ENCODE measurements at regions of chr22 and their contacts with region 1.

Region 1: DNA sequence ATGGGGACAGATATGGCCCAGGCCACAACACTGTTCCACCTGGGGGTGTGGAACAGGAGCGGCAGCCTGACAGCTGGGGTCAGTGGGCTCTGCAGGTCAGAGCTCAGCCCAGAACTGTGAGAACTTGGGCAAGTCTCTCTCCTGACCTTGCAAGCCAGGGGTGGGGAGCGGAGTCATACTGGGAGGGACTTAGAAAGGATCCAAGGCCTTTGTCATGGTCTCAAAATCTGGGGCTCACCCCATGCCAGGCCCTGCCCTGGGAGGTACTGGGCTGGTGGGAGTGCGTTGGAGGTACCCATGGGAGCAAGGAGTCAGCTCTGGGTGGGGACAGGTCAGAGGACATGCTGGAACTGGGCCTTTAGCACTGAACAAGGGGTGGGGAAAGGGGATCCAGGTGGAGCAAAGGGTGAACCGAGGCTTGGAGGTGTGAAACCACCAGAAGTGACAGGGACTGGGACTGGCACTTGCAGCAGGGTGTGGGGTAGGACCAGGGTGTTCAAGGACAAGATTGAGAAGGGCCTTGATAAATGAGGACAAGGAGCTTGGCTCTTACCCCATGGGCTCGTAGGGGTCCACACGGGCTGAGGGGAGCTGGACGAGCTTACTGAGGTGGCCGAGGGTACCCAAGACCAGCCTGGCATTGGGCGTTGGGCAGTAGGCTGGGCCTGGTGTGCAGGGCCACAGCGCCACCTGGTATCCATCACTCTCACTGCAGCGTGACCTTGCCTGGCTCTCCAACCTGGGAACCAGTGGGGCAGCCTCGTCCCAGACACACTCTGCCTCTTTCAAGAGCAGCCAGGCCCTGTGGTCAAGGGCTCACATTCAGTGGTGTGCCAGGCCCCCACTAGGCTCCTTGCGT is 7.4 kb upstream of the PMM1 start:
- DNase-seq: no peak
- ATAC-seq: peak; percentile 67
- H3K4me3 Mint-ChIP-seq: no peak overlapping the region
- H3K27ac Mint-ChIP-seq: no peak overlapping the region
- H3K4me1 Mint-ChIP-seq: no peaks in the 10 kb centered on the region
- H3K27me3 Mint-ChIP-seq: no peaks in the 10 kb centered on the region
- CTCF ChIP-seq: no peak

Region 2: DNA sequence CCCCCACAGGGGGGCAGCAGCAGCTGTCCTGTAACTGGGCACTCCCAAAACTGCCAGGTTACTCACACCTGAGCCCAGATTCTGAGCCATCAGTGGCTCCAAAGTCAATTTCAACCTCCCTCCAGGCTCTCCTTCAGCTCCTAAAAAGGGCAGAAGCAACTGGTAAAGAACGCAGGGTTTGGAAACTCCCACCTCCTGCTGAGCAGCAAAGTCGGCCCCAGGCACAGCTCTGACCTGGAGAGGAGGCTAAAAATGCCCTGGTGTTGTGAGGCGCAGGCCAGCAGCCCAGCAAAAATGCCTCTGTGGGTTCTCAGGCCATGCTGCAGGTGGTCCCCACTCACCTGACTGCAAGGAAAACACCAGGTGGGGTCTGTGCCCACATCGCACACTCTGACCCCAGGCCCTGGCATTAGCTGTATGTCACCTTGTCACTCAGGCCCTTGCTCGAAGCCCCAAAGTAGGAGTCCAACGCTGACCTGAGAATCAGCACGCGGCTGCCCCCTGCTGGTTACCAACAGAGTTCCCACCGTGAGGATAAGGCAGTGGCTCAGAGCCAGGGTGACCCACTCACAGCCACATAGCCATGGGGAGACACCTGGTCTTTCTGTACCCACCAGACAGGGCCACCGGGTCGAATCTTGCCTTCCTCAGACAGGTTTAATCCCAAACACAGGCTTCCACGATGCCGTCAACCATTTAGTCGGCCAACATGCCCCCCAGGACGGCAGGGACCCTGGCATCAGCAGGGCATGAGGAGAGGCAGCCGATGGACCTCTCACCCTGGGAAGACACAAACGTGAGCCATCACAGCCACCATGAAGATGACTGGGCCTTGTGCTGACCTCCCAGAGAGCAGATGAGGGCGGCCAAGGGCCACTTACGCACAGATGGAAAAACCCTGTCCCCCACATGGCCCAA is 63.8 kb before region 1 on chr22:
- CTCF ChIA-PET with region 1: no interaction called
- POLR2A ChIA-PET with region 1: no interaction called
- intact Hi-C with region 1: loop called (anchors 2 kb)
- DNase-seq: peak; percentile 64
- ATAC-seq: peak; percentile 86
- H3K4me3 Mint-ChIP-seq: no peak overlapping the region
- H3K27ac Mint-ChIP-seq: no peak overlapping the region
- H3K4me1 Mint-ChIP-seq: no peaks in the 10 kb centered on the region
- H3K27me3 Mint-ChIP-seq: no peaks in the 10 kb centered on the region
- CTCF ChIP-seq: peak; percentile 23

Measured in activated B cell treated with CpG ODN at 0.5 μM for 24 hours (primary cell).